ENCODE measurements at regions of chr11 and their contacts with region 1.

Region 1: DNA sequence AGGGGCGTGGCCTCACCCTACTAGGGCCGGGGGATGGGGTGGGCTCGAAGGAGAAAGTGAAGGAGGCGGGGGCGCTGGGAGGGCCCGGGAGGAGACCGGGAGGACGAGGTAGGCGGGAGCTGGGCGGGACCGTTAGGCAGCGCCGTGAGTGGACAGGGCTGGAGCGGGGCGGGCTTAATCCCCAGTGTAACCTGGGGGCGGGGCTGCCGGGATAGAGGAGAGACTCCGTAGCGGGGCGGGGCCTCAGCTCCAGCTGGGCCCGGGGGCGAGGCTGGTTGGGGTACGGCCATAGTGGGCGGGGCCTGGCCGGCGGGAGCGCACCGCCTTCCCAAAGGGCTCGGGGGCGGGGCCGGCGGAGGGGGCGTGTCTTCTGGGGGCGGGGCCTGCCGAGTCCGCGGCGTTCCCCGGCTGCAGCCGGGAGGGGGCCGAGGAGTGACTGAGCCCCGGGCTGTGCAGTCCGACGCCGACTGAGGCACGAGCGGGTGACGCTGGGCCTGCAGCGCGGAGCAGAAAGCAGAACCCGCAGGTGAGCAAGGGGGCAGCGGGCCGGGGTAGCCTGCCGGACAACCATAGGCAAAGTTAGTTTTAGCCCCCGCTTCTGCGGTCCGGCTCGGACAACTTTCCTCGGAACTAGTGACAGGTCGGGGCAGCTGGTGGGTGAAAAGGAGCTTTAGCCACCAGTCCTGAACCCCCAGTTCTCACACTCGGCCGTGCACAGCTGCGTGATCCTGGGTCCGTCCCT is at the start of gene CD82:
- DNase-seq: peak; percentile 100
- H3K4me3 Mint-ChIP-seq: peak within 1 kb of the TSS; percentile 85
- H3K27ac Mint-ChIP-seq: peak within 1 kb of the TSS; percentile 90
- H3K4me1 Mint-ChIP-seq: peaks cover 56% of the 10 kb centered on the region
- H3K27me3 Mint-ChIP-seq: no peaks in the 10 kb centered on the region
- total RNA-seq, gene CD82: 243 to 277 TPM

Region 2: DNA sequence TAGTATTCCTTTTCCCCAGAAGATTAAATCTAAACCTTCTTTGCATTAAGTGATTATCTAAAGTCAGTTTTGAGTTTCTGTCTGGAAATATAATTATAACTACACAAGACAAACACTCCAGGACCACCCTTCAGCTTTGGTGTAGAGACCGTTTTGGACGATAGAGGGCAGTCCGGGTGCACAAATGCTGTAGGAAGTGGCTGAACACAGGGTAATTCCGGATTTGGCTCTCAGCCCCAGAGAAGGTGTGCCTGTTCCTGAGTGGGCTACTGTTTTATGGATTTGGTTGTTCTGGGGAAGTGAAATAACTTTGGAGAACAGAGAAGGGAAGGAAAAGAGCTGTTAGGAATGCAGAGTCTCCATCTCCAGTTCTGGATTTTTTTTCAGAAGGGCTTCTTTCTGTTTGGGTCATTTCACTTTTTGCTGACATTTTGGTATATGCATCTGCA is 455.1 kb before region 1 on chr11:
- CTCF ChIA-PET with region 1: no interaction called
- POLR2A ChIA-PET with region 1: no interaction called
- intact Hi-C with region 1: no loop called
- DNase-seq: peak; percentile 70
- H3K4me3 Mint-ChIP-seq: no peak overlapping the region
- H3K27ac Mint-ChIP-seq: no peak overlapping the region
- H3K4me1 Mint-ChIP-seq: peaks cover 8% of the 10 kb centered on the region
- H3K27me3 Mint-ChIP-seq: no peaks in the 10 kb centered on the region

Region 3: GRCh38 chr11:44505581-44506054 is 59.8 kb before region 1 on chr11:
- CTCF ChIA-PET with region 1: no interaction called
- POLR2A ChIA-PET with region 1: no interaction called
- intact Hi-C with region 1: no loop called
- DNase-seq: no peak
- H3K4me3 Mint-ChIP-seq: no peak overlapping the region
- H3K27ac Mint-ChIP-seq: no peak overlapping the region
- H3K4me1 Mint-ChIP-seq: no peaks in the 10 kb centered on the region
- H3K27me3 Mint-ChIP-seq: peaks cover 10% of the 10 kb centered on the region

Region 4: GRCh38 chr11:44530413-44531115 is 34.8 kb before region 1 on chr11:
- CTCF ChIA-PET with region 1: no interaction called
- POLR2A ChIA-PET with region 1: interaction called, 3 read pairs
- intact Hi-C with region 1: loop called (anchors 2 kb)
- DNase-seq: peak; percentile 52
- H3K4me3 Mint-ChIP-seq: no peak overlapping the region
- H3K27ac Mint-ChIP-seq: peak overlapping the region; percentile 77
- H3K4me1 Mint-ChIP-seq: peaks cover 44% of the 10 kb centered on the region
- H3K27me3 Mint-ChIP-seq: peaks cover 5% of the 10 kb centered on the region

Region 5: DNA sequence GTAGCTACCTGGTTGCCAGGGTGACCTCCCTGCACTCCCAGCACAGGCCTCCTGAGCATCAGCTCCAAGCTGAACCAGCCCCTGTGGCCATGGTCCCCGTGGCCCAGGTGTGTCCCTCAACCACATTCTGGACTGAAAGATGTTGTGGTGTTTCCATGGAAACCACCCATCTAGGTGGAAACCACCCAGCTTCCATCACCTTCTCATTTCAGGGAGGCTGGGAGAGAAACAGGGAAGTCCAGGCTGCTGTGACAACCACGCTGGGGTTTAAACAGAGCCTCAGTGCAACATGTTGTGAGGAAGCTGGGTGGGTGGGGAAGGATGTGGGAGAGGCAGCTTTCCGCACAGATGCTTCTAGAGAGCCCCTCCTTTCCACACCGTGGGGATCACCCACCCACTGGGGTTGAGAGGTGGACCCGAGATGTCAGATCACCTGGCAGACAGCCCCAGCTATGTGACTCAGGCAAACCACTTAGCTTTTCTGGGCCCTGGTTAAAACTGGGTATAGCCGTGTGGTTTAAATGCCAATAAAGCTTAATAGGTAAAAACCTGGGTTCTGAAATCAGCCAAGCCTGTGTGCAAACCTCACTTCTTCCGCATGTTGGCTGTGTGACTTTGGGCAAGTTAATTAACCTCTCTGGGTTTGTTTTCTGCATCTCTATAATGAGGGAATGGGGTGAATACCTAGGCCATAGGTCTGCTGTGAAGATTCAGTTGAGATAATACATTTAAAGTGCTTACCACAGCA is 46.5 kb after region 1 on chr11:
- CTCF ChIA-PET with region 1: interaction called, 576 read pairs
- POLR2A ChIA-PET with region 1: interaction called, 14 read pairs
- intact Hi-C with region 1: loop called (anchors 1 kb)
- DNase-seq: peak; percentile 82
- H3K4me3 Mint-ChIP-seq: no peak overlapping the region
- H3K27ac Mint-ChIP-seq: peak overlapping the region; percentile 64
- H3K4me1 Mint-ChIP-seq: peaks cover 80% of the 10 kb centered on the region
- H3K27me3 Mint-ChIP-seq: no peaks in the 10 kb centered on the region

Region 6: DNA sequence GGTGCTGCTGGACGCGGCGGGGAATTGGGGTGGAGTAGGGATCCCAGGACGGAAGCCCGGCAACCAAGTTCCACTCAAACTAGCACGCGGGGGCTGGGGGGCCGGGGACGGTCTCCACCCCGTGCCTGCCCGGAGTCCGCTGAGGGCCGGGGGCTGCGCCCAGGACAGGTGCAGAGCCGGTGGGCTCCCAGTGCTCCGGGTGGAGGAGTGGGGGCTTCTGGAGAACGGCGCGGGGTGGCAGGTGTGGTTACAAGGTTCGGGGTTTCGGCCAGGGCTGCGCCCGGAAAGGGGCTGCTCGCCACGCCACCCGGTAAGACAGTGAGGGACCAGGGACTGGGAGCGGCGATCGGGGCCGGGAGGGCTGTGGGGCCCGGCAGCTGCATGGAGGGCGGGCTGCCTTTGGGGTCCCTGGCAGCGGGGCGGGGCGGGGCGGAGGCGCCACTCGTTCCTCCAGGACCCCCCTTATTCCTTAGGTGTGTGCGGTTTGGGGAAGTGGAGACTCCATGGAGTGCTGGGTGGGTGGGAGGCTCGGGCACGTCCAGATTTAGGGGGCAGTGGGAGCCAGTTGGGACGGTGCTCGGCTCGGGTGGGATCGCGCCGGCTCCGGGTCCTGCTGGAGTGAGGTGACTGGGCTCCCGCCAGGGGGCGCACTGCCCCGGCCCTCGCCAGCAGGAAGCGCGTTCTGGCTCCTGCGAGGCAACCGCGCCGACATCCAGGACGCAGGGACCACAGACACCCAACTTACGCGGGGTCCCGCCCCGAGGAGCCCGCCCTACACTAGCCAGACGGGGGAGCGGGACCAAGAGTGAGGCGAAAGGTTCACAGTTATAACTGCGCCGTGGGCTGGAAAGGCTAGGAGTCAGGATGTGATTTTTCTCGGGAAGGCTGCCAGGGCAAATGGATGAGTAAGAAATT is 162.2 kb after region 1 on chr11:
- CTCF ChIA-PET with region 1: no interaction called
- POLR2A ChIA-PET with region 1: no interaction called
- intact Hi-C with region 1: loop called (anchors 5 kb)
- DNase-seq: peak; percentile 88
- H3K4me3 Mint-ChIP-seq: peak overlapping the region; percentile 82
- H3K27ac Mint-ChIP-seq: peak overlapping the region; percentile 67
- H3K4me1 Mint-ChIP-seq: peaks cover 51% of the 10 kb centered on the region
- H3K27me3 Mint-ChIP-seq: no peaks in the 10 kb centered on the region

Region 7: DNA sequence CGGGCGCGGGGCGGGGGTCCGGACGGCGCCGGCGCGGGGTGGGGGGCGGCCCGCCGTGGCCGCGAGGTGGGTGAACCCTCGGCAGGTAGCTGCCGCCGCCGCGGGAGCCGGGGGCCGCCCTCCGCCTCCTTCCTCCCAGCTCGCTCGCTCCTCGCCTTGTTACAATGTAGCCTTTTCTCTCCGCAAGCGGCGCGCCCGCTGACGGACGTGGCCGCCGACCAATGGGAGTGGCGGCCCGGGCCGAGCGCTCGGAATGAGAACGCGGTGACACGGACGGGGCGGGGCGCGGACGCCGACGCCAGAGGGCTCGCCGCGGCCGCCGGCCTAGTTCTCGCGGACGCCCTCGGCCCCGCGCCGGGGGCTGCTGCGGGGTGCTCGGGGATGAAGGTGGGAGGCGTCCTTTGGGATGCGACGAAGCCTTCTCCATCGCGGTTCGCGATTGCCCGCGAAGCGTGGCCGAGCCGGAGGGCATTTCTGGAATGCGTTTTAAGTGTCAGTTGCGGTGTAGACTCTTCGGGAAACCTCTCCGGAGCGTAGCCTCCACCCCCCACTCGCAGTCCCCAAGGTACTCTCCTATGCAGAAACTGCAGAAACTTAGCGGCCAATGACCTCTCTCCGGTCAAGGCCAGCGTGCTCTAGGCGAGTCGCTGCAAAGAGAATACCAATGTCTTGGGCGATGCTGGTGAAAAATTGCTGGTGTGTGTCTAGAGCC is 581.8 kb after region 1 on chr11:
- CTCF ChIA-PET with region 1: no interaction called
- POLR2A ChIA-PET with region 1: no interaction called
- intact Hi-C with region 1: loop called (anchors 10 kb)
- DNase-seq: peak; percentile 95
- H3K4me3 Mint-ChIP-seq: peak overlapping the region; percentile 82
- H3K27ac Mint-ChIP-seq: peak overlapping the region; percentile 69
- H3K4me1 Mint-ChIP-seq: peaks cover 19% of the 10 kb centered on the region
- H3K27me3 Mint-ChIP-seq: peaks cover 8% of the 10 kb centered on the region

Region 8: GRCh38 chr11:45846974-45847910 is 1281.9 kb after region 1 on chr11 and contains the start of gene CRY2:
- CTCF ChIA-PET with region 1: no interaction called
- POLR2A ChIA-PET with region 1: no interaction called
- intact Hi-C with region 1: loop called (anchors 5 kb)
- DNase-seq: peak; percentile 99
- H3K4me3 Mint-ChIP-seq: peak within 1 kb of the TSS; percentile 77
- H3K27ac Mint-ChIP-seq: peak within 1 kb of the TSS; percentile 78
- H3K4me1 Mint-ChIP-seq: peaks cover 55% of the 10 kb centered on the region
- H3K27me3 Mint-ChIP-seq: no peaks in the 10 kb centered on the region
- total RNA-seq, gene CRY2: 12.1 to 13.4 TPM

Region 9: DNA sequence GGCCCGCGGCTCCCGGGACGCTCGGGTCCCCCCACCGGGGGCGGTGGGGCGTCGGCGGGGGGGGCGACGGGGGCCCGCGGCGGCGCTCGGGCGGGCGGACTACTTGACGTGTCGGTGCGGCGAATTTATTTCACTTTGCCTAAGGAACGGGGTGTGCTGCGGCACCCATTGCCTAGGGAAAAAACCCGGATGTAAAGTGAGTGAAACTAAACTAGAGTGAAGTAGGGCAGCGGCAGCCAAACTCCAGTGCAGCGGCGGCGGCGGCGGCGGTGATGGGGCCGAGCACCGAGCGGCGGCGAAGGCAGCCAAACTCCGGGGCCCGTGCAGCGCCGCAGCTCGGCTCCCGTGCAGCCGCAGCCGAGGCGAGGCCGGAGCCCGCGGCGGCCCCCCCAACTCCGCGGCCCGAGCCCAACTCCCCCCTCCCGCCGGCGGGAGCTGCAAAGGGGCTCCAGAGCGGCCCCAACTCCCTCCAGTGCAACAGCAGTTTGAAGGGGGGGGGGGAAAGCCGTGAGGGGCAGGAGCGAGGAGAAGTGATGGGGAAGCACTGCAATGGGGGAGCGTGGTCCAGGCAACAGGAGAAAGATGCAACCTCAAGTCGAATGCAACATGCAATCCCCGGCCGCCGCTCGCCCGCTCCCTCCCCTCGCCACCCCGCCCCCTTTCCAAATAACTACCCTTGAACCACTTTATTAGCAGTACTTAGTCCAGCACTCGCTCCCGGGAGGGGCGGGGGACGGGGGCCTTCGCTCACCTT is 1556.5 kb after region 1 on chr11:
- CTCF ChIA-PET with region 1: no interaction called
- POLR2A ChIA-PET with region 1: no interaction called
- intact Hi-C with region 1: loop called (anchors 10 kb)
- DNase-seq: peak; percentile 82
- H3K4me3 Mint-ChIP-seq: peak overlapping the region; percentile 77
- H3K27ac Mint-ChIP-seq: peak overlapping the region; percentile 85
- H3K4me1 Mint-ChIP-seq: peaks cover 39% of the 10 kb centered on the region
- H3K27me3 Mint-ChIP-seq: no peaks in the 10 kb centered on the region

Measured in activated CD4-positive, alpha-beta memory T cell treated with anti-CD3 and anti-CD28 coated beads for 36 hours (primary cell).